ENCODE measurements at regions of chr9 and their contacts with region 1.

Region 1: DNA sequence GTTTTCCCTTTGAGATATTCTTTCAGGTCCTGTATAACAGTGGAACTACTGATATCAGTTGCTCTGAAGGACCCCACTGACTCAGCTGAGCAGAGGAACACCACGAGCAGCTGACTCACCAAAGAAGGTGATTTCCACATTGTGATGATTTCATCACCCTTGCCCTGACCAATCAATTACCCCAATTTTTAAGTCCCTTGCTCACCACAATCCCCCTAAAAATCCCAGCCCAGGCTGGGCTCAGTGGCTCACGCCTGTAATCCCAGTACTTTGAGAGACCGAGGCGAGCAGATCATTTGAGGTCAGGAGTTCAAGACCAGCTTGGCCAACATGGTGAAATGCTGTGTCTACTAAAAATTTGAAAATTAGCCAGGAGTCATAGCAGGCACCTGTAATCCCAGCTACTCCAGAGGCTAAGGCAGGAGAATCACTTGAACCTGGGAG is 125.3 kb upstream of the ABCA1 start:
- DNase-seq: peak in 1 of 2 donors; percentile 33
- ATAC-seq: peak; percentile 61 to 66
- H3K4me3 ChIP-seq: no peak overlapping the region
- H3K27ac ChIP-seq: no peak overlapping the region
- H3K4me1 ChIP-seq: peaks cover 0 to 10% of the 10 kb centered on the region in 2 donors
- H3K27me3 ChIP-seq: no peaks in the 10 kb centered on the region
- CTCF ChIP-seq: no peak
- POLR2A ChIP-seq: no peak

Region 2: GRCh38 chr9:104982543-104982942 is 70.7 kb before region 1 on chr9:
- in situ Hi-C with region 1: loop called in 1 of 4 experiments (anchors 5 kb)
- intact Hi-C with region 1: no loop called
- DNase-seq: no peak
- ATAC-seq: no peak
- H3K4me3 ChIP-seq: no peak overlapping the region
- H3K27ac ChIP-seq: peak overlapping the region in 3 of 4 donors; percentile 70 to 76 (median 72)
- H3K4me1 ChIP-seq: peaks cover 17% of the 10 kb centered on the region in 2 donors
- H3K27me3 ChIP-seq: no peaks in the 10 kb centered on the region
- CTCF ChIP-seq: no peak
- POLR2A ChIP-seq: no peak

Measured in gastrocnemius medialis (tissue), 4 donors.